ENCODE measurements at regions of chrX and their contacts with region 1.

Region 1: DNA sequence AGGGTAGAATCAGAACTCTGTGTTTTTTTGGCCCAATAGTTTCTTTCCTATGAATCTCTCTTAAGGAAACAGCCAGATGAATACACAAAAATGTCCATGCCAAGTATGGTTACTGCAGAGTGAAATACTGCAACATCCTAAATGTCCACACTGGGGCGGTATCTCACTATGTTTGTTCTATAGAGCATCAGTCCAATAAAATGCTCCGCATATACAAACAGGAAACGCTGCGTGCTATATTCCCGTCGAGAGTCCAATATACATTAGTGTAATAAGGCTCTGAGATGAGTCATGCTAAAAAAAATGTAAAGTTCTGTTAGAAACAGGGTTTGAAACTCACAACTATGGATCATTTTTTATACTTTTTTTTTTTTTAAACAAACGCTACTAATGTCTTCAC is 72.9 kb upstream of the ENOX2 start:
- DNase-seq: peak; percentile 55
- ATAC-seq: peak; percentile 73
- H3K4me3 Mint-ChIP-seq: no peak overlapping the region
- H3K27ac Mint-ChIP-seq: no peak overlapping the region
- H3K4me1 Mint-ChIP-seq: no peaks in the 10 kb centered on the region
- H3K27me3 Mint-ChIP-seq: no peaks in the 10 kb centered on the region

Region 2: DNA sequence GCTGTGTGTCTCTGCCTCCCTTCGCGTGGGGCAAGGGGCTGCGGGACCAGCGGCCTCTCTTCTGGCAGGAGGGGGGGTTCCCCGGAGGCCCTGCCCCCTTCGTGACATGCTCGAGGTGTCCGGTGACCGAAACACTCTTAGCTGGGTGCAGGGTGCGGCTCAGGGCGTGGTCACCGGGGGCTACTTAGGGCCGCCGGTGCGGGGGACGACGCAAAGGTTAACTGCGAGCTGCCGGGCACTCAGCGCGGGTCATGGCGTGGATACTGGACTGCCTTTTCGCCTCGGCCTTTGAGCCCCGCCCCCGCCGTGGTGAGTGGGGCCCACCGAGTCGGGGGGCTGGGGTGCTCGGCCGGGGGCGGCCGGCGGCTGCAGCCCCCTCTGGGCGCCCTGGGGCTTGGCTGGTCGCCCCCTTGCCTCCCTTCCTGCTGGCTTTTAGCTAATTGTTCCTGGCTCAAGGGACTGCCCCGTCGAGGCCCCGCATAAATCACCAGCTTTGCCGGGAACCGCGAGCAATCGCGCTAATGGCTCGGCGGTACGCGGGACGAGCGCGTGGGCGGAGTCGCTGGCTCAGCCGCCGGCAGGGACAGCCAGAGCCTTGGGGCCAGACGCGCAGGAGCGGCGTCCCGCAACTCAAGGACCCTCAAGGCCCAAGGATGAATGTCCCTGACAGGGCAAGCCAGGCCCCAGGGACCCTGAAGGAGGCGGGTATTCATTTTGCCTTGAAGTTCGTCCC is 82.4 kb after region 1 on chrX and contains the start of gene ARHGAP36:
- CTCF ChIA-PET with region 1: no interaction called
- POLR2A ChIA-PET with region 1: no interaction called
- intact Hi-C with region 1: no loop called
- DNase-seq: no peak
- ATAC-seq: no peak
- H3K4me3 Mint-ChIP-seq: no peak within 1 kb of the TSS
- H3K27ac Mint-ChIP-seq: no peak within 1 kb of the TSS
- H3K4me1 Mint-ChIP-seq: no peaks in the 10 kb centered on the region
- H3K27me3 Mint-ChIP-seq: peaks cover 12% of the 10 kb centered on the region
- total RNA-seq, gene ARHGAP36: not detected

Region 3: GRCh38 chrX:131677655-131678628 is 702.0 kb after region 1 on chrX:
- CTCF ChIA-PET with region 1: interaction called, 5 read pairs
- POLR2A ChIA-PET with region 1: no interaction called
- intact Hi-C with region 1: loop called in 1 of 2 experiments (anchors 1 kb)
- DNase-seq: peak; percentile 65
- ATAC-seq: peak; percentile 44
- H3K4me3 Mint-ChIP-seq: no peak overlapping the region
- H3K27ac Mint-ChIP-seq: no peak overlapping the region
- H3K4me1 Mint-ChIP-seq: no peaks in the 10 kb centered on the region
- H3K27me3 Mint-ChIP-seq: no peaks in the 10 kb centered on the region

Measured in activated CD4-positive, alpha-beta T cell treated with anti-CD3 and anti-CD28 coated beads for 36 hours (primary cell).